PC-9 (cell line): ENCODE measurements at regions of chr20 and their contacts with region 1.

Region 1: GRCh38 chr20:47317127-47317895 is 39.2 kb downstream of the ZMYND8 start:
- DNase-seq: peak; percentile 77 to 96
- H3K4me3 ChIP-seq: peak overlapping the region; percentile 56; the same call in 1 of the 2 replicates
- H3K27ac ChIP-seq: peak overlapping the region; percentile 97
- H3K4me1 ChIP-seq: peaks cover 85% of the 10 kb centered on the region
- H3K27me3 ChIP-seq: no peaks in the 10 kb centered on the region
- CTCF ChIP-seq: no peak

Region 2: DNA sequence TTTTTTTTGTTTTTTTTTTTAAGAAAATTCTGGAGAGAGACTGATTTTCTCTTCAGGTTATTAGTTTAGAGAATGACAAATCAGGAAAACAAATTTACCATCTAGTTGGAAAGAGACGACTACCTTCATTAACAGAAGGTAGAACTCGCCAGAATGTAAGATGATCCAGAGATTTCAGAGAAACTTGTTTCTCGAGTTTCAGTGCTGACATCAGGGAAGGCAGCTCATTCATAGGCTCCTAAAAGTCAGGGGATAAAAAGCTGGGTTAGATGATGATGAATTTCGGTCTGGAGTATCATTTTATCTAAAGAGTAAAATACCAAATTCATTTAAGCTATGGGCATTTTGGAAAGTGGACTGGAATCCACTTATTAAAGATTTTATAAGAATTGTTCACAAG is 831.9 kb before region 1 on chr20:
- CTCF ChIA-PET with region 1: no interaction called
- POLR2A ChIA-PET with region 1: no interaction called
- intact Hi-C with region 1: no loop called
- DNase-seq: no peak
- H3K4me3 ChIP-seq: no peak overlapping the region
- H3K27ac ChIP-seq: no peak overlapping the region
- H3K4me1 ChIP-seq: no peaks in the 10 kb centered on the region; the same call in 1 of the 2 replicates
- H3K27me3 ChIP-seq: peaks cover 71% of the 10 kb centered on the region
- CTCF ChIP-seq: no peak

Region 3: DNA sequence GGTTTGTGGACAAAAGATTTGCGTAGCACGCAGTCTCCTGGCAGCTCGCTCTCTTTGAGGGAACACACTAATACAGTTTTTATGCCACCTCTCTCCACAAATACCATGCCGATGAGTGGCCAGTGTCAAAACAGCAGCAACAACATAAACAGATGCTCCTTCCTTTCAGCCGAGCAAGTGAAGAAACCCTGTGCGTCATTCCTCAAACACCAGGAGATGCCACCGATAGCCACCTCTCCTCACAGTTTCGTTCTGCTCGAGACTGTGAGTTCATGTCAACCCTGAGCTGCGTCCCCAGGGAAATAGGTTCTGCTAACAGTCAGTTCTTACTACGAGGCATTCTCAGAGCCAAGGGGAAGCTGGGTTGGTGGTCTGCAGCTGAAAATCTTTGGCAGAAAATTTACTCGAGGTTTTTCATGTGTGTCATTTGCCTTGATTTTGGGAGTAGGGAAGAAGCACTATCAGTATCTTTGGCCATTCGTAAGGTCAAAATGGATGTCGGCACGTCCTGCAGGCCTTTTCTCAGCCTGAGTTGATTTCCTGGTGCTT is 362.7 kb before region 1 on chr20:
- CTCF ChIA-PET with region 1: no interaction called
- POLR2A ChIA-PET with region 1: no interaction called
- intact Hi-C with region 1: loop called (anchors 5 kb)
- DNase-seq: peak; percentile 80 to 100
- H3K4me3 ChIP-seq: peak overlapping the region; percentile 33; the same call in 1 of the 2 replicates
- H3K27ac ChIP-seq: peak overlapping the region; percentile 87
- H3K4me1 ChIP-seq: peaks cover 41% of the 10 kb centered on the region
- H3K27me3 ChIP-seq: no peaks in the 10 kb centered on the region
- CTCF ChIP-seq: no peak

Region 4: DNA sequence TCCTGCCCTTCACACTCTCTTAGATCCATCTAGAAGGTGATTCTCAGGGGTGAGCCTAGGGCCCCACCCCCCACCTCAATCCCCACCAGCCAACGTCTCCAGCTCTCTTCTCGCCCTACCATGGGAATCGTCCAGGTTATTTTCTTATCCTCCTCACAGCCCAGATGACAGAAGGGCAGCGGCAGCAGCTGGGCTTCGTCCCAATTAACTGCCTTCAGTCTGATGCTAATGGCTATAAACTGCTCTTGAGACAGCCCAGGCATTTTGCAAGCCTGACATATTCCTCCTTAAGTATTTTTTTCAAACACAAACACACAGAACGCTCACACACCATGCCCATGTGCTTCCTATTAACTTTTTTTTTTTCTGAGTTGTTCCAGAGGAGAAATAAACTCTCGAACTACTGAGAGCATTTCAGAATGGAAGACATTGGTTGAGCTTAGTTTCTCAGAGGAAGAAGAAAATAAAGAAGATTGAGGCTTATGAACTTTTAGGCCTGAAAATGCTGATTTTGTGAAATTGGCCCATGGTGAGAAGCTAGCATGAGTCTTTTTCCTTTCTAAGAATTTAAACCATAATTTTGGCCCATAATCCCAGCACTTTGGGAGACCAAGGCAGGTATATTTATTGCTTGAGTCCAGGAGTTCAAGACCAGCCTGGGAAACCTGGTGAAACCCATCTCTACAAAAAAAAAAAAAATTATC is 298.0 kb before region 1 on chr20:
- CTCF ChIA-PET with region 1: no interaction called
- POLR2A ChIA-PET with region 1: no interaction called
- intact Hi-C with region 1: no loop called
- DNase-seq: no peak
- H3K4me3 ChIP-seq: no peak overlapping the region
- H3K27ac ChIP-seq: no peak overlapping the region
- H3K4me1 ChIP-seq: no peaks in the 10 kb centered on the region
- H3K27me3 ChIP-seq: peaks cover 67% of the 10 kb centered on the region
- CTCF ChIP-seq: no peak

Region 5: GRCh38 chr20:47272893-47273590 is 44.3 kb before region 1 on chr20:
- CTCF ChIA-PET with region 1: interaction called, 3 read pairs
- POLR2A ChIA-PET with region 1: interaction called, 4 read pairs
- intact Hi-C with region 1: loop called (anchors 2 kb)
- DNase-seq: peak; percentile 53 to 58
- H3K4me3 ChIP-seq: no peak overlapping the region
- H3K27ac ChIP-seq: no peak overlapping the region
- H3K4me1 ChIP-seq: peaks cover 40% of the 10 kb centered on the region
- H3K27me3 ChIP-seq: no peaks in the 10 kb centered on the region
- CTCF ChIP-seq: peak; percentile 97

Region 6: DNA sequence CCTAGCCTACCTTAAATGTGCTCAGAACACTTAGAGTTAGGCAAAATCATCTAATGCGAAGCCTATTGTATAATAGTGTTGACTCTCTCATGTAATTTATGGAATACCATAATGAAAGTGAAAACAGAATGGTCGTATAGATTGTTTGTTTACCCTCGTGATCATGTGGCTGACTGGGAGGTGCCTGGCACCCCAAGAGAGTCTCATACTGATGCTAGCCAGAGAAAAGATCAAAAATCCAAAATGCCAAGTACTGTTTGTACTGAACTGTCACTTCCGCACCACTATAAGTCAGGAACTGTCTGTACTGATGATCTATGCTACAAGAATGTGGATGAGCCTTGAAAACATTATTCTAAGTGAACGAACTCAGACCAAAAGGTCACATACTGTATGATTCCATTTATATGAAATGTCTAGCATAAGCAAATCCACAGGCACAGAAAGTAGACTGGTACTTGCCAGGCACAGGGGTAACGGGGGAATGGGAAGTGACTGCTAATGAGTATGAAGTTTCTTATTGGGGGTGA is 16.8 kb after region 1 on chr20:
- CTCF ChIA-PET with region 1: interaction called, 3 read pairs
- POLR2A ChIA-PET with region 1: no interaction called
- intact Hi-C with region 1: loop called (anchors 1 kb)
- DNase-seq: peak; percentile 50 to 97
- H3K4me3 ChIP-seq: peak overlapping the region; percentile 33; the same call in 1 of the 2 replicates
- H3K27ac ChIP-seq: peak overlapping the region; percentile 69
- H3K4me1 ChIP-seq: peaks cover 67% of the 10 kb centered on the region
- H3K27me3 ChIP-seq: no peaks in the 10 kb centered on the region
- CTCF ChIP-seq: no peak

Region 7: DNA sequence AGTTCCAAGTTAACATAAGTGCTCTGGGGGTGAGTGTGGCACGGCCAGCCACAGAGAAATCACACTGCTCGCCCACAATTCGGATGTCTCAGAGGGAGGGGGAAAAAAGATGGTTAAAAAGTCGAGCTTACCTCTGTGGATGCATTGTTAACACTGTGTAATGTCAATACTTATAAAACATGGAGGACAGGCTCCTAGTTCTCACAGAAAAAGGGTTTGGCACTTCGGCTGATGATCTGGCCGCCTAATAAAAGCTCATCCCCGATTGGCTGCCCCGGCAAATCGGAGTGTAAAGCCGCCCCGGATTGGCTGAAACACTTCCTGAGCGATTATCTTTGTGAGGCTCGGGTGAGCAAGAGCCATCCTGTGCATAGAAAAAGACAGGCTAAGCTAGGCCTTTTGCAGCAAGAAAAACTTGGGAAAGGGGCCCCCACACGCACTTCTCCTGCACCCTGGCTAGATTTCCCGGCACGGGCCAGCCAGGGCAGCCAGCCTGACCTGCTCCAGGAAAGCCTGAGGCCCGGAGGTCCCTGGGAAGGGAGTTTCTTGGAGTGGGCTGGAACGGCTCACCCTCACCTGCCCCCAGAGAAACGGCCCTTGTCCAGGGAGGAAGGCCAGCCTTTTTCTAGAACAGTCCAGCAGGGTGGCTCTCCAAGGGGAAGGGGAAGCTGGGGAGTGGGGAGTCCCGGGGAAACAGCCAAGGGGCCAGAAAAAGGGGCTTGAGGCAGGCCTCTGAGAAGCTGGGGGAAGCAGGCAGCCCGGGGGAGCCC is 39.4 kb after region 1 on chr20 and contains the start of gene ZMYND8:
- CTCF ChIA-PET with region 1: interaction called, 8 read pairs
- POLR2A ChIA-PET with region 1: interaction called, 28 read pairs
- intact Hi-C with region 1: loop called (anchors 1 kb)
- DNase-seq: peak; percentile 94 to 99
- H3K4me3 ChIP-seq: peak within 1 kb of the TSS; percentile 60
- H3K27ac ChIP-seq: peak within 1 kb of the TSS; percentile 99
- H3K4me1 ChIP-seq: peaks cover 86% of the 10 kb centered on the region
- H3K27me3 ChIP-seq: no peaks in the 10 kb centered on the region
- CTCF ChIP-seq: no peak
- total RNA-seq, gene ZMYND8: 72.3 and 107 TPM in 2 replicates

Region 8: DNA sequence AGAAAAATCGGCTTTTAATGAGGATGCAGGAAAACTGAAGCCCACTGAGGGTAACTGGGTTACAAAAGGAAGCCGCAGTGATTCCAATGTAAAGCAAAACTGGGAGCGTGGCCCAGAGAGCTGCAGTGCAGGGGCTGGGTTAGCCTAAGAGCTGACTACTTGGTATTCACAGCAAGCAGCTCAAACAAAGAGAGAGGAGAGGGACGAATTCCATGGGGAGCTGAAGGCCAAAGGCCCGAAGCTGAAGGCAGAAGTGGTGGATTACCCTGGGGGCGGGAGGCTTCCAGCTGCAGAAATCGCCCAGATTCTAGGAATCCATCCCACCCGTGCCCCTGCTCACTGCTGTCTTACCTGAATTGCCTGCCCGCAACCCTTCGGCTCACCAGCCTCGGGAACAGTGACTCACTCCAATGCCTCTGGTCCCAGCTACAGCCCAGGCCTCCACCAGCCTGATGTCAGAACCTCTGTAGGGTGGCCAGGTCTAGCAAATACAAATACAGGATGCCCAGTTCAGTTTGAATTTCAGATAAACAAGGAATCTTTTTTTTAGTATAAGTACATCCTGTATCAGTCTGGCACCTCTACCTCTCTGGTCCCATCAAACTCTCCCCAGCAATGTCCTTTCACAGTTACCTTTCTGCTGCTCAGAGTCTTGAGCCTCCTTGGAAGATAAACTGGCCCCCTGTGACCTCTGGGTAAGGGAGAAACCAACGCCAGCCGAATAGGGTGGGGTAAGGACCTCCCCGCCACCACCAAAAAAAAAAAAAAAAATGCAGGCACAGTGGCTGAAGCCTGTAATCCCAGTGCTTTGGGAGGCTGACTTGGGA is 53.8 kb after region 1 on chr20:
- CTCF ChIA-PET with region 1: no interaction called
- POLR2A ChIA-PET with region 1: no interaction called
- intact Hi-C with region 1: no loop called
- DNase-seq: no peak
- H3K4me3 ChIP-seq: no peak overlapping the region
- H3K27ac ChIP-seq: no peak overlapping the region
- H3K4me1 ChIP-seq: peaks cover 11% of the 10 kb centered on the region
- H3K27me3 ChIP-seq: no peaks in the 10 kb centered on the region
- CTCF ChIP-seq: no peak

Region 9: GRCh38 chr20:47432211-47433210 is 115.2 kb after region 1 on chr20:
- CTCF ChIA-PET with region 1: no interaction called
- POLR2A ChIA-PET with region 1: no interaction called
- intact Hi-C with region 1: loop called (anchors 5 kb)
- DNase-seq: peak; percentile 87 to 98
- H3K4me3 ChIP-seq: peak overlapping the region; percentile 51
- H3K27ac ChIP-seq: peak overlapping the region; percentile 99
- H3K4me1 ChIP-seq: peaks cover 51% of the 10 kb centered on the region
- H3K27me3 ChIP-seq: no peaks in the 10 kb centered on the region
- CTCF ChIP-seq: no peak

Region 10: GRCh38 chr20:47453142-47453782 is 136.0 kb after region 1 on chr20:
- CTCF ChIA-PET with region 1: no interaction called
- POLR2A ChIA-PET with region 1: no interaction called
- intact Hi-C with region 1: no loop called
- DNase-seq: peak; percentile 52 to 92
- H3K4me3 ChIP-seq: peak overlapping the region; percentile 10; the same call in 1 of the 2 replicates
- H3K27ac ChIP-seq: peak overlapping the region; percentile 93
- H3K4me1 ChIP-seq: peaks cover 66% of the 10 kb centered on the region
- H3K27me3 ChIP-seq: no peaks in the 10 kb centered on the region
- CTCF ChIP-seq: no peak

Region 11: DNA sequence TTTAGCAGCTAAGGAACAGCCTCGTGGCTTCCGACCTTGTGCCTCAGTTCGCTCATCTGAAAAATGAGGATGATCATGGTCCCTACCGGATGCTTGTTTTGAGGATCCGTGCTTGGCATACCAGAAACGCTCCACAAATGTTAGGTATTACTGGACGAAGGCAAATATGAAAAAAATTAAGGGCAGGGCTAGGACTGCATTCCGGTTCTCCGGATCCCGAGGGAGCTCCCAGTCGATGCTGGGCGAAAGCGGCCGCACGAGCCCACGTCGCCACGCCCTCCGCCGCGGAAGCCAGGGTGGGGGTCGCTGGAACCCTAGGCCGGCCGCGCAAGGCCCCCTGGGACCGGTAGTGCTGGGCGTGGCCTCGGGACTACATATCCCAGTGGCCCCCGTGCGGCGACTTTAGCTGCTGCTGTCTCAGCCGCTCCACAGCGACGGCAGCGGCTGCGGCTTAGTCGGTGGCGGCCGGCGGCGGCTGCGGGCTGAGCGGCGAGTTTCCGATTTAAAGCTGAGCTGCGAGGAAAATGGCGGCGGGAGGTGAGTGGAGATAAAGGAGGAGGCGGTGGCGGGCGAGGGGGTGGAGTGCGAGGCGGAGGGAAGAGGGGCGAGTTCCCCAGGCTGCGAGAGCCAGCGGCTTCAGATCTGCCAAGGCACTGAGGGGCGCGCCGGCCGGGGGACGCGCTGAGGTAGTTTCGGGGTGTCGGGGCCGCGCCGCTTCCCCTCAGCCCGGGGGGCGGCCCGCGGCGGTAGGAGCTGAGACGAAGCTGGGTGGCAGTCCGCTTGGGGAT is 184.4 kb after region 1 on chr20 and contains the start of gene NCOA3:
- CTCF ChIA-PET with region 1: interaction called, 4 read pairs
- POLR2A ChIA-PET with region 1: interaction called, 15 read pairs
- intact Hi-C with region 1: loop called (anchors 5 kb)
- DNase-seq: peak; percentile 90 to 98
- H3K4me3 ChIP-seq: peak within 1 kb of the TSS; percentile 77
- H3K27ac ChIP-seq: peak within 1 kb of the TSS; percentile 90
- H3K4me1 ChIP-seq: peaks cover 56% of the 10 kb centered on the region
- H3K27me3 ChIP-seq: no peaks in the 10 kb centered on the region
- CTCF ChIP-seq: peak; percentile 68
- total RNA-seq, gene NCOA3: 40.3 and 78.0 TPM in 2 replicates